Activated CD4-positive, alpha-beta memory T cell treated with anti-CD3 and anti-CD28 coated beads for 36 hours (primary cell): ENCODE measurements at regions of chr3 and their contacts with region 1.

Region 1: GRCh38 chr3:88003115-88003755 is 55.6 kb downstream of the CGGBP1 start:
- DNase-seq: no peak
- H3K4me3 Mint-ChIP-seq: no peak overlapping the region
- H3K27ac Mint-ChIP-seq: no peak overlapping the region
- H3K4me1 Mint-ChIP-seq: no peaks in the 10 kb centered on the region
- H3K27me3 Mint-ChIP-seq: peaks cover 2% of the 10 kb centered on the region

Region 2: DNA sequence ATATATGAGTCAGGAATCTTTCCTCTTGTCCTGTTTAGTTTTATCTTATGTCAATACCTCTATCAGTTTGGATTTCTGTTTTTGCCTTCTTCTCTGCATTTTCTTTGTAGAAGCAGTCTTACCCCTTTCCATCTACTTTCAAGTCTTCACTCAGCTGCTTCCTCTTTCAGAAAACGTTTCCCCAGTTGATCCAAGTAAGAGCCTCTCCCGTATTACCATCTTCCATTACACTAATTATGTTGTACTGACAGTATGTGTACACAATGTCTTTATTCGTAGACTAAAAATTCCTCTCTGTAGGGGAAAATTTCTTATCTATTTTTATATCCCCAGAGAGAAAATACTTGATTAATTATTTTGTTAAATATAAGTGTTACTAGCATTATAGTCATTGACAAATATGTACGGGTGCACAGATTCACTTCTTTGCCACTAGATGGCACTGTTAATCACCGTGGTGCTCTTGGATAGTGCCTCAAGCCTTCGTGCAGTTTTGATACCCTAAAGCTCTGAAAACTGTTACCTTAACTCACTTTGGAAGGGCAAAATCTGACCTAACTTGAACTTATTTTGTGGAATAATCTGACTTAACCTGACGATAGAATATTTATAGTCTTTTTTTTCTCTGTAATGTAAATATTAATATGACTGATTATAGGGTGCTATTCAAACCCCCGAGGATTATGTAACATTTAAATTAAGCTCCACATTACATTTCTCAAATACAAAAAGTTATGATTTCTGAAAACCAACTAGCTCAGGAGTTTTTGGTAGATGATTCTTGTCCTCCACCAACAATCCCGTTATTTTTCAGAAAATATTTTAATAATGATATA is 652.7 kb before region 1 on chr3:
- CTCF ChIA-PET with region 1: interaction called, 16 read pairs
- POLR2A ChIA-PET with region 1: no interaction called
- intact Hi-C with region 1: loop called (anchors 1 kb)
- DNase-seq: peak; percentile 16
- H3K4me3 Mint-ChIP-seq: no peak overlapping the region
- H3K27ac Mint-ChIP-seq: no peak overlapping the region
- H3K4me1 Mint-ChIP-seq: no peaks in the 10 kb centered on the region
- H3K27me3 Mint-ChIP-seq: no peaks in the 10 kb centered on the region

Region 3: GRCh38 chr3:87771341-87772192 is 231.7 kb before region 1 on chr3:
- CTCF ChIA-PET with region 1: interaction called, 20 read pairs
- POLR2A ChIA-PET with region 1: no interaction called
- intact Hi-C with region 1: loop called (anchors 1 kb)
- DNase-seq: peak; percentile 33
- H3K4me3 Mint-ChIP-seq: no peak overlapping the region
- H3K27ac Mint-ChIP-seq: no peak overlapping the region
- H3K4me1 Mint-ChIP-seq: no peaks in the 10 kb centered on the region
- H3K27me3 Mint-ChIP-seq: peaks cover 4% of the 10 kb centered on the region

Region 4: GRCh38 chr3:87900061-87900460 is 103.2 kb before region 1 on chr3:
- CTCF ChIA-PET with region 1: interaction called, 3 read pairs
- POLR2A ChIA-PET with region 1: no interaction called
- intact Hi-C with region 1: loop called (anchors 1 kb)
- DNase-seq: no peak
- H3K4me3 Mint-ChIP-seq: no peak overlapping the region
- H3K27ac Mint-ChIP-seq: no peak overlapping the region
- H3K4me1 Mint-ChIP-seq: no peaks in the 10 kb centered on the region
- H3K27me3 Mint-ChIP-seq: no peaks in the 10 kb centered on the region

Region 5: GRCh38 chr3:88093266-88093665 is 90.0 kb after region 1 on chr3:
- CTCF ChIA-PET with region 1: no interaction called
- POLR2A ChIA-PET with region 1: no interaction called
- intact Hi-C with region 1: no loop called
- DNase-seq: no peak
- H3K4me3 Mint-ChIP-seq: no peak overlapping the region
- H3K27ac Mint-ChIP-seq: no peak overlapping the region
- H3K4me1 Mint-ChIP-seq: peaks cover 2% of the 10 kb centered on the region
- H3K27me3 Mint-ChIP-seq: no peaks in the 10 kb centered on the region